Astrocyte of the cerebellum (primary cell): ENCODE measurements at regions of chr17 and their contacts with region 1.

Region 1: DNA sequence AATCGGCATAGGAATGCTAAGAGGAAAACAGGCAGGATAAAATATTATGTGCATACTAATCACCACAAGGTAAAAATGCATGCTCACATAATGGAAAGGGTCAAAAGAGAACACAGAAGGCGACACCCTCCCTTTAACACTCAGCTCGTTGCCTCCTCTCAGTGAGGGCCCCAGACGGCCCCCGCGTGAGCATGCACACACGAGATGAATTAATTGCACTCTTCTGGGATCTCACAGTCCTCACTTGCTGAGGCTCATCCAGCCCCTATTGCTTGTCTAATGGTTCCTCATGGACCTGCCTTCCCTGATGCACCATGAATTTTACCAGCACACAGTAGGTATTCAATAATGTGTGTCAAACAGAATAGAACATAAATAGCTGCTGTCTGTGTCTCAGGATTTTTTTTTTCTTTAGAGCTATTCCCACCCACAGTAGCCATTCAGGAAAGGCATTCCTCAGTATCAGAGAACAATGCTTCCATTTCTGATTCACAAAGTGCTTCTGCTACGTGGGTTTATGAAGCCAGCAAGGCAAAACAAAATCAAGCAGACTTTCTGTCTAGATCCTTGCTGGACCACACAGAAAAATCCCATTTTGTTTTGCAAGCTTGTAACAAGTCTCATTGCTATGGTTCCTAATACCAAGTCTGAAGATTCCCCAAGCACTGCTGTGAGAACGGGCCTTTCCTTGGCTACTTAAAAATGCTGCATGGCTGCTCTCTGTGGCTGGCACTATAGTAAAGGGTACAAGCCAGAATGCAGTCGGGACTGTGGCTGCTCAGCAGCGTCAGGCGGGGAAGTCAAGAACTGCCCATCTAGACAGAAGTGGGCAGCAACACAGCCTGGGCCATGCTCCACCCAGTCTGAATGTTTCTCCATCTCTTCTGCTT is 43.6 kb downstream of the TOM1L2 start:
- DNase-seq: no peak
- H3K4me3 ChIP-seq: no peak overlapping the region
- CTCF ChIP-seq: no peak

Region 2: GRCh38 chr17:17890773-17891759 is 37.6 kb before region 1 on chr17:
- in situ Hi-C with region 1: no loop called
- DNase-seq: peak; percentile 39
- H3K4me3 ChIP-seq: no peak overlapping the region
- CTCF ChIP-seq: peak; percentile 90

Region 3: GRCh38 chr17:17978481-17979424 is 50.1 kb after region 1 on chr17:
- in situ Hi-C with region 1: loop called (anchors 5 kb)
- DNase-seq: no peak
- H3K4me3 ChIP-seq: no peak overlapping the region
- CTCF ChIP-seq: no peak

Region 4: DNA sequence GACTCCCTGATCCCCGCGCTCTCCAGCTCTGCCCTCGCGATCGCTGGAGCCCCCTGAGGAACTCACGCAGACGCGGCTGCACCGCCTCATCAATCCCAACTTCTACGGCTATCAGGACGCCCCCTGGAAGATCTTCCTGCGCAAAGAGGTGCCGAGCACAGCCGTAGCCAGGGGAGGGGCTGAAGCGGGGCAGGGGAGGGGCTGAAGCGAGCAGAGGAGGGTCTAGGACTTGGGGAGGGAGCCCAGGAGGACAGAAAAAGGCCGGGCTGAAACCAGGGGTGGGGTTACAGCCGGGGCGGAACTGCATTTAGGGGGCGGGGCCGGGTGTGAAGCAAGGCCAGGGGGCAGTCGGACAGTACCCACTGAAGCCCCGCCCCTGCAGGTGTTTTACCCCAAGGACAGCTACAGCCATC is 225.1 kb after region 1 on chr17:
- in situ Hi-C with region 1: no loop called
- DNase-seq: peak; percentile 47
- H3K4me3 ChIP-seq: peak overlapping the region; percentile 42
- CTCF ChIP-seq: no peak